ENCODE measurements at regions of chr5 and their contacts with region 1.

Region 1: DNA sequence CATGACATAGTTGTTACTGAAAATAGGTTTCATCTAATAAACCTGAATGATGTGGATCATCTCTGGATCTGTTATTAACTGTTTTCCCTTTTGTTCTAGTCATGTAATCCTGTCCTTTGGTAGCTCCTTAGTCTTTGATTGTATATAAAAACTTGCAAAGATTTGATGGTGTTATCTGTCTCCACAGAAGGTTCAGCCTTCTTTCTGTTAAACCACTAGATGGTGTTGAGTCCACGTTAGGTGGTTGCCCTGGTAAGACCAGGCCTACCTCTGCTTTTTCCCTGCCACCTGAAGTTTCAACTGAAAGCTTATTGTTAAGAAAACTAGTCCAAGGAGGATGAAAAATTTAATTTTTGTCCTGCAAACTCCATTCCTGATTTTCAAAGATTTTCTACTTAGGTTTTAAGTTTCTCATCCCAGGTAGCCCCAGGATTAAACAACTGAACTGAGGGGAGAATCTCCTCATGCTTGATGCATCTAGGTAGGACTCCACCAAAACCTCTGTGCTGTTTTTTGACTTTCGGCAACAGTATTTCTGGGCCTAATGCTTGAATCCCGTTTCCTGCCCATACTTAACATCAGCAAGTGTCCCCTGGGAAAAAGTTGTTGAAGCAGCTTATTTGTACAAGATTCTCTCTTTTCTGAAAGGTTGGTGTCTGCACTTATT is 68.5 kb downstream of the RICTOR start:
- DNase-seq: no peak
- H3K4me3 ChIP-seq: no peak overlapping the region
- H3K27ac ChIP-seq: no peak overlapping the region
- H3K4me1 ChIP-seq: no peaks in the 10 kb centered on the region
- H3K27me3 ChIP-seq: no peaks in the 10 kb centered on the region
- CTCF ChIP-seq: peak in 3 of 6 experiments; percentile 7 to 21 (median 8)
- POLR2A ChIP-seq: no peak

Region 2: GRCh38 chr5:39080597-39081204 is 75.0 kb after region 1 on chr5:
- intact Hi-C with region 1: loop called (anchors 10 kb)
- DNase-seq: no peak
- H3K4me3 ChIP-seq: no peak overlapping the region
- H3K27ac ChIP-seq: no peak overlapping the region
- H3K4me1 ChIP-seq: peaks cover 0 to 22% (median 3%) of the 10 kb centered on the region in 3 donors
- H3K27me3 ChIP-seq: no peaks in the 10 kb centered on the region
- CTCF ChIP-seq: peak; percentile 69 to 85 (median 75)
- POLR2A ChIP-seq: no peak

Region 3: GRCh38 chr5:39119404-39120051 is 113.8 kb after region 1 on chr5:
- intact Hi-C with region 1: no loop called
- DNase-seq: no peak
- H3K4me3 ChIP-seq: no peak overlapping the region
- H3K27ac ChIP-seq: no peak overlapping the region
- H3K4me1 ChIP-seq: no peaks in the 10 kb centered on the region
- H3K27me3 ChIP-seq: no peaks in the 10 kb centered on the region
- CTCF ChIP-seq: no peak
- POLR2A ChIP-seq: no peak